Upper lobe of right lung (tissue), 1 donor: ENCODE measurements at regions of chr17 and their contacts with region 1.

Region 1: DNA sequence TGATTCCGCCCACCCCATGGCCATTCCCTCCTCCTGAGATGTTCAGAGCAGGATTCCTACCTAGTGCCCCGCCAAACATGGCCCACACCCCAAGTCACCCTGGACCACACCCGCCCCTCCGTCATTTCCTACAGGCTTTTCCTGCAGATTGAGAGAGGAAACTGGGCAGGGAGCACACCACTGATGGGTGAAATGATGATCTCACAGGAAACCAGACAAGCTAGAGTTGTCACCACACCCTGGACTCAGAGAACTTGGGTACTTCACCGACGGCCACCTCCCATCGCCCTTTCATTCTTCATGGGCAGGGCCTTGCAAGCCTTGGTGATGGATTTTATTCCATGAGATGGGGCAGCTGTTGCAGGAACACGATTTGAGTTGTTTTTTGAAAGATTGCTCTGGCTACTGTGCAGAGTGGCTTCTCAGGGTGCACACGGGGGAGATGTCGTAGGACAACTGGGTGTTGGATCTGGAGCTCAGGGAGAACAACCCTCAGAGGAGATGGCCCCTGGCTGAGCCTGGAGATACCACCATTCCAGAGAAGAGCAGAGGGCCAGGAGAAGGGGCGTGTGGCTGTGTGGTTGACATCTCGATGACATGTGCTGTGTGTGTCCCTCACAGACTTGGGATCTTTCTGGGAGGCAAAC is 7.4 kb upstream of the B9D1 start:
- DNase-seq: no peak
- ATAC-seq: peak; percentile 59
- H3K4me3 ChIP-seq: no peak overlapping the region
- H3K27ac ChIP-seq: peak overlapping the region; percentile 12
- H3K4me1 ChIP-seq: peaks cover 17% of the 10 kb centered on the region
- H3K27me3 ChIP-seq: no peaks in the 10 kb centered on the region
- CTCF ChIP-seq: no peak

Region 2: DNA sequence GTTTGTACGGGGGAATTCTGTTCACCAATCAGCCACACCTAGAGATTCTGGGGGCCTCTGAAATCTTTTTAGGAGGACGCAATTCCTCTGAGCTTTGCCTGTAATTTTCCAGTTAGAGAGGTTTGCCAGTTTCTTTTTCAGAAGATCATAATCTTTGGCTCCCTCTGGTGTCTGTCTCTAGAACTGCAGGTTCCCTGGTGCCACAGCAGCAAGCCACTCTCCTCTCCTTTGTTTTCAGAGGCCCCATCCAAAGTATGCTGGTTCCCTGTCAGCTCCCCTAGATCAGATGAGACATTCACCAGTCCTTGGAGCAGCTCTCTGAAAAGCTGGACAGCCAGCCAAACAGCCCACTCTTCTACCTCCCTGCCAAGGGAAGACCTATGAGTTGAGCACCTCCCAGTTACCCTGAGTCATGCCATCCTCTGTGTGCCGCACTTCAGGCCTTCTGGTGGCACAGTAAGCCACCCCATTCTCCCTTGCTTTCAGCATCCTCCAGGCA is 77.2 kb after region 1 on chr17:
- intact Hi-C with region 1: loop called (anchors 5 kb)
- DNase-seq: no peak
- ATAC-seq: peak; percentile 93
- H3K4me3 ChIP-seq: no peak overlapping the region
- H3K27ac ChIP-seq: peak overlapping the region; percentile 42
- H3K4me1 ChIP-seq: peaks cover 25% of the 10 kb centered on the region
- H3K27me3 ChIP-seq: no peaks in the 10 kb centered on the region
- CTCF ChIP-seq: peak; percentile 97

Region 3: GRCh38 chr17:19482576-19482975 is 112.6 kb after region 1 on chr17:
- intact Hi-C with region 1: no loop called
- DNase-seq: no peak
- ATAC-seq: peak; percentile 41
- H3K4me3 ChIP-seq: no peak overlapping the region
- H3K27ac ChIP-seq: no peak overlapping the region
- H3K4me1 ChIP-seq: no peaks in the 10 kb centered on the region
- H3K27me3 ChIP-seq: no peaks in the 10 kb centered on the region
- CTCF ChIP-seq: no peak